Caki2 (cell line): ENCODE measurements at regions of chr1 and their contacts with region 1.

Region 1: DNA sequence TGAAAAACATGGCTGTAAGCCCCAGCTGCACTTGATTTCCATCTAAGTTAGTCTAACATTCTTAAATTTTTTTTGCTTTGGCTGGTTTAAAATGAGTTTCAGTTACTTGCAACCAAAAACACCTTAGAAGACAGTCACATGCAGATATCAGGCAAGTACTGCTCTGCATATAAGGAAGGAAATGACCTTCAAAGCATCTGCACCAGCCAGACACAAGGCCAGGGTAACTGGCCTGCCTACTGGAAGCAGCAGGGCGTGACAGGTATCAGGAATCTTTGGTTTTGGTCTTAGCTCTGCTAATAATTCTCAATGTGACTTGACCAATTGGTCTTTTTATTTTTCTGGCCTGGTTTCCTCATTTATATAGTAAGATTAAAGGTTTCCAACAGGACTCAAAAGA is 33.5 kb downstream of the SCYL3 start:
- DNase-seq: peak; percentile 24

Region 2: GRCh38 chr1:169893494-169894362 is 33.5 kb after region 1 on chr1 and contains the start of gene SCYL3:
- in situ Hi-C with region 1: no loop called
- DNase-seq: peak; percentile 98
- total RNA-seq, gene SCYL3: 3.5 and 8.2 TPM in 2 replicates

Region 3: GRCh38 chr1:170010443-170010842 is 150.3 kb after region 1 on chr1:
- in situ Hi-C with region 1: no loop called
- DNase-seq: no peak

Region 4: GRCh38 chr1:170063109-170063826 is 203.1 kb after region 1 on chr1:
- in situ Hi-C with region 1: loop called (anchors 10 kb)
- DNase-seq: peak; percentile 86